Testis (tissue), 5 donors: ENCODE measurements at regions of chr3 and their contacts with region 1.

Region 1: DNA sequence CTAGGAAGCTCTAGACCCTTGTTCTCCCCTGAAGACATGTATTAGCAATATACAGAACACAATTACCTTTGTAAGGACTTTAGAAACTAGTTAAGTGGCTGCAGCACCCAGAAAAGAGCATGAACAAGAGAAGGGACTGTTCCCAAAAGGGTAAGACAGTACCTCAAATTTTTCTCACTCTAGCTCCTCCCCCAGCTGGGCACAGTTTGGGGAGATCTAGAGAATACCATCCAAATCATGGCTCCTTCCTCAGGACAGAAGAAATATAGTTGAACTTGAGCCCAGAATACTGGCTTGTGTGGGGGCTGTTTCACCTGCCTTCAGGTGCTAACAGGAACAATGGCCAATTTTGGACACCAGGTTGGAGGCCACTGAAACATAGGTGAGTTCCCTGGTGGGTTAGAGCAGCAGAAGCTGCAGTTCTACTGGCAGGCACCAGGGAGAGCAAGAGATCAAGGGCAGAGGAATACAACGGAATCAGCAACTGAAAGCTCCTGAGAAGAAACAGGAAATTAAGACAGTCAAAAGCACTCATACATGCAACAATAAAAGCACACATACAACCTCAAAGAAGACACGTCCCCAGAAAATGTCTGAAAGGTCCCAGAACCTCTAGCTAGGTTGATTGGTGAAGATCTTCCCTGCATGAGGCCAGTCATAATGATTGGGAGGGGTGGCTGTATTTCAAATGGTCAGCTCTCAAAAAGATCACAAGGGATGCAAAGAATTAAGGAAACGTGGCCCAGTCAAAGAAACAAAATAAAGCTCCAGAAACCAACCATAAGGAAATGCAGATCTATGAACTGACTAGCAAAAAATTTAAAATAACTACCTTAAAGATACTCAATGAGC is 104.9 kb upstream of the ASB14 start:
- DNase-seq: peak; percentile 36
- H3K4me3 ChIP-seq: no peak overlapping the region
- H3K27ac ChIP-seq: no peak overlapping the region
- H3K4me1 ChIP-seq: no peaks in the 10 kb centered on the region
- H3K27me3 ChIP-seq: no peaks in the 10 kb centered on the region
- CTCF ChIP-seq: peak; percentile 47 to 67 (median 57)
- POLR2A ChIP-seq: no peak

Region 2: GRCh38 chr3:57192028-57192427 is 205.4 kb before region 1 on chr3:
- intact Hi-C with region 1: no loop called
- DNase-seq: no peak
- H3K4me3 ChIP-seq: no peak overlapping the region
- H3K27ac ChIP-seq: no peak overlapping the region
- H3K4me1 ChIP-seq: no peaks in the 10 kb centered on the region
- H3K27me3 ChIP-seq: no peaks in the 10 kb centered on the region
- CTCF ChIP-seq: no peak
- POLR2A ChIP-seq: no peak

Region 3: DNA sequence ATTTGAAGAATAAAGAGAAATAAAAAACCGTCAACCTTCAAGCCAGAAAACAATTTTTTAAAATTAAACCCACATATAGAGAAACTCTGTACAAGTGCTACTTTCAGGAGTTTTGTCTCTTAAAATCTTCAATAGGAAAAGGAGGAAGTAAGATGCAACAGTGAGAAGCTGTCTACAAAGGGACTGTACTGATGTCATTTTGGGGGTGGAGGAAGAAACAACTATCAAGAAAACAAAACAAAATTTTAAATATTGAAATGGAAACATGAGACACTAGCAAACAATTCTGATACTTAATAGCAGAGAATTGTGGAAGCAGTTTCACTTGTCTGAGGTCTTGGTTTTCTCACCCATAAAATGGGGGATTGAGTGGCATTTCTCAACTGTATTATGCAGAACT is 443.1 kb after region 1 on chr3:
- intact Hi-C with region 1: loop called (anchors 10 kb)
- DNase-seq: no peak
- H3K4me3 ChIP-seq: no peak overlapping the region
- H3K27ac ChIP-seq: no peak overlapping the region
- H3K4me1 ChIP-seq: no peaks in the 10 kb centered on the region
- H3K27me3 ChIP-seq: no peaks in the 10 kb centered on the region
- CTCF ChIP-seq: no peak
- POLR2A ChIP-seq: no peak